ENCODE measurements at regions of chr10 and their contacts with region 1.

Region 1: GRCh38 chr10:110414563-110415309 is 83.0 kb upstream of the DUSP5 start:
- DNase-seq: peak; percentile 98
- ATAC-seq: peak; percentile 70
- H3K4me3 ChIP-seq: peak overlapping the region in 1 of 2 experiments; percentile 32; a peak in 2 of 4 replicates
- H3K27ac ChIP-seq: peak overlapping the region; percentile 95
- H3K4me1 ChIP-seq: peaks cover 84 to 92% of the 10 kb centered on the region in 2 experiments
- H3K27me3 ChIP-seq: no peaks in the 10 kb centered on the region
- CTCF ChIP-seq: no peak
- POLR2A ChIP-seq: peak; percentile 18
- RAD21 ChIP-seq: no peak

Region 2: GRCh38 chr10:110395725-110396651 is 18.7 kb before region 1 on chr10:
- CTCF ChIA-PET with region 1: no interaction called
- POLR2A ChIA-PET with region 1: interaction called, 186 read pairs
- RAD21 ChIA-PET with region 1: interaction called, 5 to 10 read pairs
- intact Hi-C with region 1: loop called (anchors 1 kb)
- DNase-seq: peak; percentile 96
- ATAC-seq: peak; percentile 58
- H3K4me3 ChIP-seq: peak overlapping the region in 1 of 2 experiments; percentile 19; a peak in 2 of 4 replicates
- H3K27ac ChIP-seq: peak overlapping the region; percentile 71
- H3K4me1 ChIP-seq: peaks cover 69 to 85% of the 10 kb centered on the region in 2 experiments
- H3K27me3 ChIP-seq: no peaks in the 10 kb centered on the region
- CTCF ChIP-seq: no peak
- POLR2A ChIP-seq: no peak
- RAD21 ChIP-seq: no peak

Region 3: GRCh38 chr10:110535958-110536891 is 121.5 kb after region 1 on chr10:
- CTCF ChIA-PET with region 1: no interaction called
- POLR2A ChIA-PET with region 1: no interaction called
- RAD21 ChIA-PET with region 1: no interaction called
- intact Hi-C with region 1: loop called (anchors 10 kb)
- DNase-seq: no peak
- ATAC-seq: peak; percentile 71
- H3K4me3 ChIP-seq: peak overlapping the region; percentile 8 to 31; a peak in 3 of 4 replicates
- H3K27ac ChIP-seq: peak overlapping the region; percentile 12; the same call in 1 of the 2 replicates
- H3K4me1 ChIP-seq: peaks cover 31 to 44% of the 10 kb centered on the region in 2 experiments
- H3K27me3 ChIP-seq: no peaks in the 10 kb centered on the region
- CTCF ChIP-seq: peak in 2 of 3 experiments; percentile 41 to 56; a peak in 3 of 6 replicates
- POLR2A ChIP-seq: no peak
- RAD21 ChIP-seq: no peak